ENCODE measurements at regions of chr7 and their contacts with region 1.

Region 1: GRCh38 chr7:1986366-1987083 is 246.2 kb downstream of the MAD1L1 start:
- DNase-seq: no peak

Region 2: GRCh38 chr7:1939434-1940401 is 46.8 kb before region 1 on chr7:
- intact Hi-C with region 1: loop called in 1 of 2 experiments (anchors 5 kb)
- DNase-seq: peak; percentile 80

Region 3: DNA sequence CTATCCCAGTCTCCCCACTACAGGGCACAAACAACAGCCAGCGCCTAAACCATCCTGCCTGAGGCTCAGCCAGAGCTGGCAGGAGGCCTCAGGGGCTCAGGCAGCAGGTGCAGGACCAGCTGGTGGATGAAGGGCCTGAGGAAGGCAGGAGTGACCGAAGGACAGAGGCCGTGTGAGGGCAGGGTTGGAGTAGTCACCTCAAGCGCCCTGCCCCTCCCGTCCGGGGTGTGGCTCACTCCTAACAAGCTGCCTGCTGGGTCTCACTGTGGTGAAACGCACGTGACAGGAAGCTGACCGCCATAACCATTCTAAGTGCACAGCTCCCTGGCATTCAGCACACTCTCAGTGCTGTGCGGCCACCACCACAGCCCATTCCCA is 35.4 kb before region 1 on chr7:
- intact Hi-C with region 1: no loop called
- DNase-seq: peak; percentile 80

Region 4: DNA sequence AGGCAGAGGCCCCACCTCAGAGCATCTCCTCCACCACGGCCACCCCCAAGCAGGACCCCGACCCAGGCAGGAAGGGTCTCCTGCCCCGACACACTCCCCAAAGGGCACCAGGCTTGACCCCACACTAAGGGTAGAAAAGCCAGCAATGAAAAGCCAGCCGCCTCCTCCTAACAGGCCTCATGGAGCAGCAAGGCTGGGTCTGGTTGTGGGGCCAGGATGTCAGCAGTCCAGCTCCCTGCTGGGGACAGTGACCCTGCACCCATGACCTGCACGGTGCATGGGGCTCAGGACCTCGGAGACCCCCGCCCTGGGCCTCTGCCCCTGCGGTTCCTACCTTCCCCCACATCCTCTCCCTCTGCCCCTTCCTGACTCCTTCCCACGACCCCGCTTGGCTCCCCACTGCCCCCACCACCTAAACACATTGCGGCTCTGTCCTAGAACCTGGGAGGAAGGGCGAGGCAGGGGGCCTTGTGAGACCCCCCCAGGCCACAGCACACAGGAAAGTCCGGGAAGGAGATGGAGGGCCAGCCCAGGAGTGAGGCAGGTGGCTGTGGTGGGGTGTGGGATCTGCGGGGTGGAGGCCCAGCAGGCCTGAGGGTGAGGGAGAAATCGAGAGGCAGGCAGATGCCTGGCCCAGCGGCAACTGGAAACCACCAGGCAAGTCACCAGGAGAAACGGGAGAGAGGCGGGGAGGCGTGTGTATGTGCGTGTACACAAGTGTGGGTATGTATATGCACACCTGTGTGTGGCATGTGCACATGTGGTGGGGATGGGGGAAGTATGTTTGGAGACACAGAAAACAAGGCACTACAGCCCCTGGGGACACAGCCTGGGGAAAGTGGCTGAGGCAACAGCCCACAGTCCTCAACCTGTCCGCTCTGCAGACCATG is 16.3 kb after region 1 on chr7:
- intact Hi-C with region 1: no loop called
- DNase-seq: peak; percentile 66

Region 5: GRCh38 chr7:2023877-2024566 is 37.5 kb after region 1 on chr7:
- intact Hi-C with region 1: no loop called
- DNase-seq: peak; percentile 68

Measured in posterior vena cava (tissue), 2 donors.